Activated CD8-positive, alpha-beta T cell treated with anti-CD3 and anti-CD28 coated beads, Interleukin-2, amount 10 ng/mL, durations not matched to agents 7 days and 5 days (primary cell): ENCODE measurements at regions of chr12 and their contacts with region 1.

Region 1: GRCh38 chr12:51424662-51425438 is at the start of gene SLC4A8:
- DNase-seq: peak; percentile 89
- ATAC-seq: peak; percentile 90
- H3K4me3 Mint-ChIP-seq: peak within 1 kb of the TSS; percentile 75
- H3K27ac Mint-ChIP-seq: peak within 1 kb of the TSS; percentile 26
- H3K4me1 Mint-ChIP-seq: peaks cover 24% of the 10 kb centered on the region
- H3K27me3 Mint-ChIP-seq: peaks cover 5% of the 10 kb centered on the region
- total RNA-seq, gene SLC4A8: 11.4 to 12.6 TPM

Region 2: GRCh38 chr12:51281202-51281924 is 143.5 kb before region 1 on chr12:
- CTCF ChIA-PET with region 1: no interaction called
- POLR2A ChIA-PET with region 1: no interaction called
- DNase-seq: no peak
- ATAC-seq: no peak
- H3K4me3 Mint-ChIP-seq: no peak overlapping the region
- H3K27ac Mint-ChIP-seq: no peak overlapping the region
- H3K4me1 Mint-ChIP-seq: no peaks in the 10 kb centered on the region
- H3K27me3 Mint-ChIP-seq: no peaks in the 10 kb centered on the region

Region 3: DNA sequence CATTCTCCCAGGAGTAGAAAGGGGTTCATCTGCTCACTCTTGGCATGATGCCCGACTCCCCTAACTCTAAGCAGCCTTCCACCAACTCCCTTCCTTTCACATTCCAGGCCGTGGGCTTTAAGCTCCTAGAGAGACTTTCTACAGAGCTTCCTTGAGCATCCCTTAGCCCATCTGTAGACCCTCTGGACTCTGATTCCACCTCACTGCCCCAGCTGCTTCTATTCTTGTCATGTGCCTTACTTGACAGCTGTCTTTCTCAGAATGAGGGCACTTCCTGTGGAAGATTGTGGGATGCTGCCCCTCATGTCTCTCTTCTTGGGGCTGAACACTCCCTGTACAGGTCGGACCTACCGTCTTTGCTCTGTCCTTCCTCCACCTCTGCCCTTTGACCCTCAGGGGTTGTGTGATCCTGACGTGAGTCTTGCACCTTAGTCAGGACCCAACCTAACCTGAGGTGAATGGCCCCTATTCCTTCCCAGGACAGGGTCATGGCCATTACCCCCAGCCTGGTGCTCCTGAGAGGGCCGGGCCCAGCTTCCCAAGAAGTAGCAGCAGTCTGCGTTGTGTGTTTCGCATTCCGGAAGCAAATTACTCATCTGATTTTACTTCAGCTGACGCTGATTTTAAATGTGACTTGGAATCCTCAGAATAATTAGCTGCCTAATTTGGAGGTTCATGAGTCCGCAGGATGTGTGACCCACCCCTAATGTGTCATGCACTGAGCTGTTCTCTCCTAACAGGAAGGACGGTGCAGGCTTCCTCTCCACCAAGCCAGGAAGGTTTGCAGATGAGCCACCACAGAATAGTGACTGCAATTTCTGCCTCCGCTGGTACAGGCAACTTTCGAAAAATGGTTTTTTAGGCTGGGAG is 30.9 kb before region 1 on chr12:
- CTCF ChIA-PET with region 1: interaction called, 43 read pairs
- POLR2A ChIA-PET with region 1: no interaction called
- DNase-seq: peak; percentile 70
- ATAC-seq: peak; percentile 24
- H3K4me3 Mint-ChIP-seq: peak overlapping the region; percentile 84
- H3K27ac Mint-ChIP-seq: peak overlapping the region; percentile 97
- H3K4me1 Mint-ChIP-seq: peaks cover 62% of the 10 kb centered on the region
- H3K27me3 Mint-ChIP-seq: no peaks in the 10 kb centered on the region

Region 4: DNA sequence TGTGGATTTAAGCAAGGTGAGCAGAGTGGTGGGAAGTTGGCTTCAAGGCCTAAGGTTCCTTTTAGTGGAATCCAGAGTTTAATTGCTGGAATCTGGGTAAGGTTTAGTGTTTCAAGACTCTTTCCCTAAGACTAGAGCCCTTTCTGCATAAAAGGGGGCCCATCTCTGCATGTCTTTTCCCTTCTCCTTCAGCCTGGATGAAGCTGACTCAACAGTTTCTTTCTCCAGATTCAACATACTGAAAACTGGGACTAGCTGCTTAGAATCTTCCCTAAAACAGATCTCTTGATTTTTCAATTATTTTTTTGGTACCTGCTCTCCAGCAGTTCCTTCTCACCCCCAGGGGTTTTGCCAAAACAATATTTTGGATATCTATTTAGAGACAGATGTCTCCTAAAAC is 33.8 kb after region 1 on chr12:
- CTCF ChIA-PET with region 1: no interaction called
- POLR2A ChIA-PET with region 1: no interaction called
- DNase-seq: no peak
- ATAC-seq: no peak
- H3K4me3 Mint-ChIP-seq: no peak overlapping the region
- H3K27ac Mint-ChIP-seq: no peak overlapping the region
- H3K4me1 Mint-ChIP-seq: no peaks in the 10 kb centered on the region
- H3K27me3 Mint-ChIP-seq: no peaks in the 10 kb centered on the region

Region 5: GRCh38 chr12:51531978-51532497 is 107.2 kb after region 1 on chr12:
- CTCF ChIA-PET with region 1: interaction called, 135 read pairs
- POLR2A ChIA-PET with region 1: interaction called, 3 read pairs
- DNase-seq: peak; percentile 86
- ATAC-seq: peak; percentile 97
- H3K4me3 Mint-ChIP-seq: no peak overlapping the region
- H3K27ac Mint-ChIP-seq: no peak overlapping the region
- H3K4me1 Mint-ChIP-seq: peaks cover 11% of the 10 kb centered on the region
- H3K27me3 Mint-ChIP-seq: peaks cover 23% of the 10 kb centered on the region

Region 6: DNA sequence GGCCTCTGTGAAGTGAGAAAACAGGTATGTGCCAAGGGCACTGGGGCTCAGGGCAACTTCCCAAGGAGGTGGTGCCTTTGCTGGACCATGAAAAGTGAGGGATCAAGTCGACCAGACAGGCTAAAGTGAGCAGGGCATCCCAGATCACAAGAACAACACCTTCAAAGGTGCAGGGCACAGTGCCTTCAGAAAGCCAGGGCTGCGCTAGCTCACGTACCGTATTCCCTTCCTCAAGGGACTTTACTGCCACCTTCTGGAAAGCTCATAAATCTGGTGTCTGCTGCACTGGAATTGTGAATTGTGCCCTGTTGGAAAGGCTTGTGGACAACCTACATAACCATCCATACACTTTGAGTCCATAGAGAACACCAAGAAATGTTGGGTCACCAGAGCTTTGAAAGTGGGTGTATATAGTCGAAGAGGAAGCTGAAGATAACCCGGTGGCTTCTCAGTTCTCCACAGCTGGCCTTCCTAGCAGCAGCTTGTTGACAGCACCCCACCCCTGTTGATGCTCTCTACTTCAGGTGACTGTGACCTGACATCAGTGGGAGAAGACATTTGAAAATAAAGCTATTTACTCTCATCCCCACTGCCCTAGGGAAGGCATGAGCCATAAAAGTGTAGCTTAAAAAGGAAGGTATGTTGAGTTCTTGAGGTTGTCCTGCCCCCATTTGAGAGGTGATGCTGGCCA is 399.2 kb after region 1 on chr12:
- CTCF ChIA-PET with region 1: interaction called, 10 read pairs
- POLR2A ChIA-PET with region 1: no interaction called
- DNase-seq: peak; percentile 41
- ATAC-seq: no peak
- H3K4me3 Mint-ChIP-seq: no peak overlapping the region
- H3K27ac Mint-ChIP-seq: no peak overlapping the region
- H3K4me1 Mint-ChIP-seq: peaks cover 29% of the 10 kb centered on the region
- H3K27me3 Mint-ChIP-seq: no peaks in the 10 kb centered on the region